ENCODE measurements at regions of chr21 and their contacts with region 1.

Region 1: DNA sequence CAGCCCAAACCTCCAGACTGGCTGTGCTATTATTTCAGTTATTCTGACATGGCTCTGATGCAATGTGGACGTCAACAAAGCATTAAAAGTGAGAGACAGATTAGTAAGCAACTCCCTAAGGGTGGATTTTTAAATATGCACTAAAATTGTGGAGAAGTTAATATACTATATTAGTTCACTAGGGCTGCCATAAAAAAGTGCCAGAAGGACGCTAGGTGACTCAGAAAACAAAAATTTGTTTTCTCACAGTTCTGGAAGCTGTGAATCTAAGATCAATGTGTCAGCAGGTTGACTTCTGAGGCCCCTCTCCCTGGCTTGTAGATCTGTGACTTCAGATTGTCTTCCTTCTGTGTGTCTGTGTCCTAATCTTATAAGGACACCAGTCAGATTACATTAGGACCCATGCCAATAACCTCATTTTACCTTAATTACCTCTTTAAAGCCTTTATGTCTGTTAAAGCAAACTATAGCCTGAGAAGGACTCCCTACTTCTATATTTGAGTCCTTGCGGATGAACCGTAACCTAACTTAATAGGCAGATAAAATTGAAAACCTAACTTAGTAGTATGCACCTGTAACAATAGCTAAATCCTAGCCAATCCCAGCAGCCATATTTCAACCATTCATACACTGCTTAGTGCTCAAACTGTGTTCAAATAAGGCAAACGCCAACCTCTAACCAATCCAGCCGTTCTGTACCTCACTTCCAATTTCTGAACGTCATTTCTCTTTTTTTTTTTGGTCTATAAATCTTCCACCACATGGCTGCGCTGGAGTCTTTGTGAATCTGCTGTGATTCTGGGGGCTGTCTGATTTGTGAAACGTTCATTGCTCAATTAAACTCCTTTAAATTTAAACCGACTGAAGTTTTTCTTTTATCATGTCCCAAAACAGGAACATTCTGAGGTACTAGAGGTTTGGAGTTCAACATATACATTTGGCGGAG is 65.8 kb upstream of the BACH1 start:
- DNase-seq: no peak
- ATAC-seq: no peak

Region 2: DNA sequence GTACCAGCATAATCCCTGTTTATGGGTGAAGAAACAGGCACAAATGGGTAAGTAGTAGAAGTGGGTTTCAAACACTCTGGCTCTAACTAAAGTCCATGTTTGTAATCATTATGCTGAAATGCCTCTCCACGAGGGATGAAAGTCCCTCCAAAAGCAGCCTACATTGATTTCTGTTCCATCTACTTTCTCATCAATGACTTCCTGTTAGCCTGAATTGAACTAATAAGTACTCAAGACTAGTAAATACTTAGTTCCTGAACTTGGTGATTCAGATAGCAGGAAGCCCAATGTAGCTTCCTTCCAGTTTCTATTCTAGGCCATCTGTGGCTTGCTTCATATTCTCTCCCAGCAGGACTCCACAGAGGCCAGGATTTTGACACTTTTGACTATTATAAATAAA is 54.5 kb after region 1 on chr21:
- intact Hi-C with region 1: loop called (anchors 5 kb)
- DNase-seq: no peak
- ATAC-seq: no peak